ENCODE measurements at regions of chr19 and their contacts with region 1.

Region 1: DNA sequence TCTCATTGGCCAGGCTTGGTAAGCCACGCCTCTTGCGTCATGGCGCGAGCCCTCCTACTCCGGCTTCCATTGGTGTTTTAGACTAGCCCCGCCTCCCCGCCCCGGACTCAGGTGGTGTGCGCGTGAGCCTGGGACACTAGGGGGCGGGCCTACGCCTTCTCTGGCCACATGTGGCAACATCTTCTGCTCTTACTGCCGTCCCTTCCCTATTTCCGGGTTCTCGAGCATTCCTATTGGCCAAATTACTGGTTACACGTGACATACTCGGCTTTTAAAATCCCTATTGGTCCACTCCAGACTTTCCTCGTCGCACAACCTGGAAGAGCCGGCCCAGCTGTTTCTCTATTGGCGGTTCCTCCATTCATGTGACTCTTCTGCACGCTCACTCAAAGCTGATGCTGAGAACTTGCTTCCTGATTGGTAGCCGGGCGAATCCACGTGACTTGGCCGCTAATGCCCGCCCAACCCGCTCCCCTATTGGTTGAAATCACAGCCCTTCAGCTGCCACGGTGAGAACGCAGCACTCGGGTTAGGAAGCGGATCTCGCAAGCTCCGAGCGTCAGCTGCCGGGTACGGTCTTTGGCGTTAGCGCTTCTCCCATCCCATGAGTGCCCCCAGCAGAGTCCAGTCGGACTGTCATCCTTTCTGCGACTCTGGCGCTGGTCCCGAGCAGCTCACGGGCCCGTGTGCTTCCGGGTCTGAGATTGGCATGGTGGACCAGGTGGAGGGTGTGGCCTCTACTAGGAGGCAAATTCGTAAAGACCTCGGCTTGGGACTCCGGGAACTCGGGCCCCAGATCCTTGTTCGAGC is at the start of gene BLOC1S3:
- DNase-seq: peak; percentile 96 to 100 (median 100)
- ATAC-seq: peak; percentile 85 to 86
- H3K4me3 Mint-ChIP-seq: peak within 1 kb of the TSS; percentile 88 to 100 (median 94)
- H3K27ac Mint-ChIP-seq: peak within 1 kb of the TSS; percentile 93 to 99 (median 96)
- H3K4me1 Mint-ChIP-seq: peaks cover 16 to 59% (median 50%) of the 10 kb centered on the region in 4 donors
- H3K27me3 Mint-ChIP-seq: no peaks in the 10 kb centered on the region
- polyA plus RNA-seq, gene BLOC1S3: 8.4 to 14.4 (median 9.7) TPM

Region 2: GRCh38 chr19:45038931-45039893 is 139.3 kb before region 1 on chr19 and contains the start of gene CLASRP:
- POLR2A ChIA-PET with region 1: interaction called, 10 read pairs
- DNase-seq: peak; percentile 79 to 90 (median 86)
- ATAC-seq: peak; percentile 91 to 95
- H3K4me3 Mint-ChIP-seq: peak within 1 kb of the TSS; percentile 93 to 99 (median 97)
- H3K27ac Mint-ChIP-seq: peak within 1 kb of the TSS; percentile 87 to 99 (median 96)
- H3K4me1 Mint-ChIP-seq: peaks cover 19 to 45% (median 39%) of the 10 kb centered on the region in 4 donors
- H3K27me3 Mint-ChIP-seq: no peaks in the 10 kb centered on the region
- polyA plus RNA-seq, gene CLASRP: 2.0 to 6.7 (median 5.3) TPM

Region 3: GRCh38 chr19:45092747-45093678 is 85.5 kb before region 1 on chr19 and contains the start of gene PPP1R37:
- POLR2A ChIA-PET with region 1: interaction called, 25 read pairs
- DNase-seq: peak; percentile 84 to 96 (median 90)
- ATAC-seq: peak; percentile 78 to 80
- H3K4me3 Mint-ChIP-seq: peak within 1 kb of the TSS; percentile 91 to 99 (median 94)
- H3K27ac Mint-ChIP-seq: peak within 1 kb of the TSS; percentile 97 to 100 (median 98)
- H3K4me1 Mint-ChIP-seq: peaks cover 46 to 81% (median 67%) of the 10 kb centered on the region in 4 donors
- H3K27me3 Mint-ChIP-seq: no peaks in the 10 kb centered on the region
- polyA plus RNA-seq, gene PPP1R37: 0.40 to 2.0 (median 0.83) TPM

Region 4: GRCh38 chr19:45142726-45143110 is 35.7 kb before region 1 on chr19:
- POLR2A ChIA-PET with region 1: no interaction called
- DNase-seq: no peak
- ATAC-seq: no peak
- H3K4me3 Mint-ChIP-seq: no peak overlapping the region
- H3K27ac Mint-ChIP-seq: peak overlapping the region in 1 of 10 donors; percentile 87
- H3K4me1 Mint-ChIP-seq: peaks cover 0 to 4% (median 2%) of the 10 kb centered on the region in 4 donors
- H3K27me3 Mint-ChIP-seq: no peaks in the 10 kb centered on the region

Region 5: DNA sequence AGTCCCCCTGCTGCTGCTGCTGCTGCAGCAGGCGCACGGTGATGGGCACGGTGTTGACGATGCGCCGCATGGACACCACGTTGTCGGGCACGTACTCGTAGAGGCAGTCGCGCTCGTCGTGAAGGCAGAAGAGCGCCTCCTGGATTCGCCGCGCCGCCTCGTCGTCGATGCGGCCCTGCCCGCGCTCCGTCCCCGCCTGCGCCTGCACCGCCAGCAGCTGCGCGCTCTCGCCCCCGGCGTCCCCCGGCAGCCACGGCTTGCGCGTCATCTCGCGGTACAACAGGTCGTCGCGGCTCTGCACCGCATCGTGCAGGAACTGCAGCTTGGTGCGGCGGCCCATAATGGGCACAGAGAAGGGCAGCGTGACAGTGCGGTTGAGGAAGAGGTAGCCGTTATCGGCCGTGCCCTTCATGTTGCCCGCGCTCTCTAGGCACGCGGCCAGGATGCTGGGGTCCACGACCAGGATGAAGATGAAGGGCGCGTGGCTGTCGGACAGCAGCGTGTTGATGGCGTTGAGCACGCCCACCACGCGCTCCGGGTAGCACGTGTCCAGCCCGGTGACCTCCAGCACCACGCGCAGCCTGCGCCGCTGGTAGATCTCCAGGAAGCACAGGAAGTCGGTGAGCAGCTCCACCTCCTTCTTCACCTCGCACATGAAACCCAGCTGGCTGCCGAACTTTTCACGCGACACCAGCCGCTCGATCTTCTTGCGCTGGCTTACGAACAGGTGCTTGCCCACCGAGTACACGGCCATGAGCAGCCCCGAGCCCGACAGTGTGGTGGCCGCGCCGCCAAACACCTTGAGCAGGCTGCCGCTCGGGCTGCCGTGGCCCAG is 25.7 kb before region 1 on chr19:
- POLR2A ChIA-PET with region 1: interaction called, 24 read pairs
- DNase-seq: peak; percentile 21 to 75 (median 40)
- ATAC-seq: peak; percentile 73 to 76
- H3K4me3 Mint-ChIP-seq: peak overlapping the region; percentile 74 to 89 (median 84)
- H3K27ac Mint-ChIP-seq: peak overlapping the region in 9 of 10 donors; percentile 20 to 89 (median 67)
- H3K4me1 Mint-ChIP-seq: peaks cover 16 to 32% (median 29%) of the 10 kb centered on the region in 4 donors
- H3K27me3 Mint-ChIP-seq: peaks cover 1 to 35% (median 15%) of the 10 kb centered on the region in 5 donors

Region 6: GRCh38 chr19:45200568-45200994 is 22.1 kb after region 1 on chr19:
- POLR2A ChIA-PET with region 1: no interaction called
- DNase-seq: no peak
- ATAC-seq: no peak
- H3K4me3 Mint-ChIP-seq: no peak overlapping the region
- H3K27ac Mint-ChIP-seq: no peak overlapping the region
- H3K4me1 Mint-ChIP-seq: peaks cover 0 to 4% (median 0%) of the 10 kb centered on the region in 4 donors
- H3K27me3 Mint-ChIP-seq: peaks cover 0 to 3% (median 0%) of the 10 kb centered on the region in 5 donors

Region 7: DNA sequence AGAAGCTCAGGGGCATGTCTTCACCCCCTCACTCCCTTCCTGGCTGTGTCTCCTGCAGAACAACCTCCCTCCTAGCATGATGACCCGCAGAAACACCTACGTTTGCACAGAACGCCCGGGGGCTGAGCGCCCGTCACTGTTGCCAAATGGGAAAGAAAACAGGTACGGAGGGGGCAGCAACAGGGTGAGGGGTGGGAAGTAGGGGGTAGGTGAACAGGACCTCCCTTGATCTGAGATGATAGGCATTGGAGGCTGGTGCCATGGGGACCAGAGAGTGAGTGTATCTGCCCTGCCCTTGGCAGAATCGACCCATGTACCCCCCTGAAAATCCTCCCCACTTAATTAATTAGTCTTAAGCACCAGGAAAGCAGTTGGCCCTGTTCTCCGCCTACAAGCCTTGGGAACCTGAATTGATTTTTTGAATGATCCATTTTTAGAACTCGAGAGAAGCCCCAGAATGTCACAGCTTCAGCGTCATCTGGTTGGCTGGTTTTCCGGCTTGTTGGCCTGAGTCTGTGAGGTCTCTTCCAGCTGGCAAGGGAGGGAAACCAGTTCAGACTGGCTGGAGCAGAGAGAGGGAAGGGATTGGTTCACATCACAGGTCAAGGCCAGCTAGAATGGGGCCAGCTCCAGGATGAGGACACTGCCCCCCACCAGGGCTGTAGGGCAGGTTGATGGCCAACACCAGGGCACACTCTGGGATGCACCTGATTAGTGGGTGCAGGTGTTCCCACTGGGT is 116.0 kb after region 1 on chr19:
- POLR2A ChIA-PET with region 1: no interaction called
- DNase-seq: no peak
- ATAC-seq: no peak
- H3K4me3 Mint-ChIP-seq: no peak overlapping the region
- H3K27ac Mint-ChIP-seq: no peak overlapping the region
- H3K4me1 Mint-ChIP-seq: no peaks in the 10 kb centered on the region
- H3K27me3 Mint-ChIP-seq: no peaks in the 10 kb centered on the region